ENCODE measurements at regions of chr16 and their contacts with region 1.

Region 1: GRCh38 chr16:79381552-79382042 is 218.9 kb downstream of the MAF start:
- DNase-seq: peak in 4 of 9 experiments; percentile 13 to 77 (median 42)
- ATAC-seq: peak; percentile 64
- H3K4me3 ChIP-seq: peak overlapping the region; percentile 18 to 29
- H3K4me3 Mint-ChIP-seq: peak overlapping the region; percentile 58
- H3K27ac ChIP-seq: peak overlapping the region; percentile 44 to 87
- H3K27ac Mint-ChIP-seq: peak overlapping the region; percentile 87
- H3K4me1 ChIP-seq: peaks cover 16% of the 10 kb centered on the region
- H3K4me1 Mint-ChIP-seq: peaks cover 26% of the 10 kb centered on the region
- H3K27me3 ChIP-seq: no peaks in the 10 kb centered on the region
- H3K27me3 Mint-ChIP-seq: peaks cover 6% of the 10 kb centered on the region
- CTCF ChIP-seq: no peak

Region 2: DNA sequence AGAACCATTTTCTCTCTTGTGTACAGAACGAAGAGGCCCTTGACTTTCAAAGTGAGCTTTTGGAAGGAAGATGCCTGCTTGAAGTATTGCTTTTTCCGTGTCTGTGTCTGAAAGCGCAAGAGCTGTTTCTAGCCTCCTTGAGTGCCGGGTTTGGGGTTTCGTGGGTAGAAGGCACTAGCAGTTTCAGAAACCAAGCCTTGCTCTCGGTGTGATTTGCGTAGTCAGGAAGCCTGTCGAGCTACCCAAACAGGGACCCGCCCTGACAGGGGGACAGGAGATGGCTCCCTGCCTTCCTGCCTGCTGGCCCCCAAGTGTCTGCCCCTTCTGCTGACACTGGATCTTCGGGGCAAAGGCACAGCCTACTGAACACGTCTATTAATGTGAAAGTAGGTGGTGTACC is 103.1 kb before region 1 on chr16:
- CTCF ChIA-PET with region 1: interaction called, 4 read pairs
- POLR2A ChIA-PET with region 1: no interaction called
- intact Hi-C with region 1: loop called in 1 of 2 experiments (anchors 10 kb)
- DNase-seq: peak; percentile 31 to 89 (median 54)
- ATAC-seq: peak; percentile 87
- H3K4me3 ChIP-seq: no peak overlapping the region
- H3K4me3 Mint-ChIP-seq: peak overlapping the region; percentile 35
- H3K27ac ChIP-seq: peak overlapping the region; percentile 17 to 75
- H3K27ac Mint-ChIP-seq: peak overlapping the region; percentile 86
- H3K4me1 ChIP-seq: peaks cover 23% of the 10 kb centered on the region
- H3K4me1 Mint-ChIP-seq: peaks cover 51% of the 10 kb centered on the region
- H3K27me3 ChIP-seq: peaks cover 0 to 4% of the 10 kb centered on the region in 2 experiments
- H3K27me3 Mint-ChIP-seq: peaks cover 25% of the 10 kb centered on the region
- CTCF ChIP-seq: no peak

Region 3: GRCh38 chr16:79328402-79329165 is 53.0 kb before region 1 on chr16:
- CTCF ChIA-PET with region 1: no interaction called
- POLR2A ChIA-PET with region 1: no interaction called
- intact Hi-C with region 1: no loop called
- DNase-seq: peak in 1 of 9 experiments; percentile 18
- ATAC-seq: no peak
- H3K4me3 ChIP-seq: no peak overlapping the region
- H3K4me3 Mint-ChIP-seq: no peak overlapping the region
- H3K27ac ChIP-seq: no peak overlapping the region
- H3K27ac Mint-ChIP-seq: no peak overlapping the region
- H3K4me1 ChIP-seq: no peaks in the 10 kb centered on the region
- H3K4me1 Mint-ChIP-seq: no peaks in the 10 kb centered on the region
- H3K27me3 ChIP-seq: peaks cover 0 to 8% of the 10 kb centered on the region in 2 experiments
- H3K27me3 Mint-ChIP-seq: peaks cover 3% of the 10 kb centered on the region
- CTCF ChIP-seq: no peak

Measured in CD8-positive, alpha-beta T cell (primary cell).